HepG2 (cell line): ENCODE measurements at regions of chr11 and their contacts with region 1.

Region 1: GRCh38 chr11:46718155-46719019 is 626 bp upstream of the F2 start:
- DNase-seq: peak; percentile 98
- ATAC-seq: peak; percentile 92
- H3K4me3 ChIP-seq: peak overlapping the region in 2 of 3 experiments; percentile 3 to 92; a peak in 4 of 6 replicates
- H3K27ac ChIP-seq: peak overlapping the region; percentile 92
- H3K4me1 ChIP-seq: peaks cover 87% of the 10 kb centered on the region
- H3K27me3 ChIP-seq: no peaks in the 10 kb centered on the region; a peak in 1 of 5 replicates
- CTCF ChIP-seq: peak; percentile 50
- EP300 ChIP-seq: peak; percentile 77 to 97; a peak in 2 of 4 replicates
- POLR2A ChIP-seq: peak; percentile 56 to 58
- RAD21 ChIP-seq: peak; percentile 55

Region 2: GRCh38 chr11:46616998-46617675 is 101.2 kb before region 1 on chr11 and contains the starts of genes ATG13 and HARBI1:
- CTCF ChIA-PET with region 1: no interaction called
- POLR2A ChIA-PET with region 1: interaction called, 11 read pairs
- in situ Hi-C with region 1: no loop called
- intact Hi-C with region 1: no loop called
- DNase-seq: peak; percentile 77
- ATAC-seq: peak; percentile 97
- H3K4me3 ChIP-seq: peak within 1 kb of the TSS; percentile 99 to 100 (median 100)
- H3K27ac ChIP-seq: peak within 1 kb of the TSS; percentile 98
- H3K4me1 ChIP-seq: peaks cover 53% of the 10 kb centered on the region
- H3K27me3 ChIP-seq: no peaks in the 10 kb centered on the region; a peak in 1 of 5 replicates
- CTCF ChIP-seq: no peak
- EP300 ChIP-seq: peak in 1 of 2 experiments; percentile 45; a peak in 1 of 4 replicates
- POLR2A ChIP-seq: peak; percentile 60 to 87
- RAD21 ChIP-seq: 0 out of 2 replicates have a peak, but pooled peaks have one; percentile 12
- total RNA-seq, gene ATG13: 55.0 and 61.8 TPM in 2 replicates
- total RNA-seq, gene HARBI1: 4.8 and 6.9 TPM in 2 replicates

Region 3: DNA sequence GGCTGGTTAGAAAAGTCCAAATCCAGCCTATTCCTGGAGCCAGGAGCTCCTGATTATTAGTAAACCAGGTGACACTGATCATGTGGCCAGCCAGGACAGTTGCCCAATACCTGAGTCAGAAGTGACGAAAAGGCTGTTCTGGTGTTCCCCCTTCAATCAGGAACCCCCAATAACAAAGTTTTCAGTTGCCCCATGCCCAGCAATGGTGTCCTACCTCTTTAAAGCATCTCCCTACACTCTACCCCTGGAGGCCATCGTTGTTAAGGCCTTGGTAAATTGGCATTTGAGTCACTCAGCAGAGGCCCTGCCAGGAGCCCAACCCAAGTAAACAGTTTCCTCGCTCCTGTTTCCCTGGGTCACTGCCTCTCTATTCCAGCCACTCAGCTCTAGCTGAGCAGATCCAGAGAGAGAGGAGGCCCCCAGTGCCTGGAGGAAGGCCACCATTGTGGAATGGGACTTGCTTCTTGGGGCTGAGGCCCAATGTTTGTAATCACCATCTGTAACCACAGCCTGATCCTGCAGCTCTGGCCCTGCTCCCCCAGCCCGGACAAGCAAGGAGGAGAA is 43.0 kb before region 1 on chr11:
- CTCF ChIA-PET with region 1: no interaction called
- POLR2A ChIA-PET with region 1: interaction called, 22 read pairs
- in situ Hi-C with region 1: no loop called
- intact Hi-C with region 1: loop called (anchors 5 kb)
- DNase-seq: peak; percentile 55
- ATAC-seq: peak; percentile 71
- H3K4me3 ChIP-seq: peak overlapping the region in 1 of 3 experiments; percentile 19; a peak in 2 of 6 replicates
- H3K27ac ChIP-seq: peak overlapping the region; percentile 67
- H3K4me1 ChIP-seq: peaks cover 27% of the 10 kb centered on the region
- H3K27me3 ChIP-seq: no peaks in the 10 kb centered on the region
- CTCF ChIP-seq: no peak
- EP300 ChIP-seq: no peak
- POLR2A ChIP-seq: no peak
- RAD21 ChIP-seq: no peak

Region 4: GRCh38 chr11:46700241-46701077 is 17.9 kb before region 1 on chr11 and contains the starts of genes ARHGAP1 and ZNF408:
- CTCF ChIA-PET with region 1: no interaction called
- POLR2A ChIA-PET with region 1: interaction called, 272 read pairs
- in situ Hi-C with region 1: no loop called
- intact Hi-C with region 1: loop called (anchors 1 kb)
- DNase-seq: peak; percentile 97
- ATAC-seq: peak; percentile 94
- H3K4me3 ChIP-seq: peak within 1 kb of the TSS; percentile 83 to 99 (median 98)
- H3K27ac ChIP-seq: peak within 1 kb of the TSS; percentile 97
- H3K4me1 ChIP-seq: peaks cover 60% of the 10 kb centered on the region
- H3K27me3 ChIP-seq: no peaks in the 10 kb centered on the region; a peak in 1 of 5 replicates
- CTCF ChIP-seq: no peak
- EP300 ChIP-seq: peak in 1 of 2 experiments; percentile 37; a peak in 2 of 4 replicates
- POLR2A ChIP-seq: peak; percentile 82 to 98
- RAD21 ChIP-seq: peak; percentile 33; the same call in 1 of the 2 replicates
- total RNA-seq, gene ARHGAP1: 18.6 and 22.4 TPM in 2 replicates
- total RNA-seq, gene ZNF408: 8.3 and 12.5 TPM in 2 replicates

Region 5: DNA sequence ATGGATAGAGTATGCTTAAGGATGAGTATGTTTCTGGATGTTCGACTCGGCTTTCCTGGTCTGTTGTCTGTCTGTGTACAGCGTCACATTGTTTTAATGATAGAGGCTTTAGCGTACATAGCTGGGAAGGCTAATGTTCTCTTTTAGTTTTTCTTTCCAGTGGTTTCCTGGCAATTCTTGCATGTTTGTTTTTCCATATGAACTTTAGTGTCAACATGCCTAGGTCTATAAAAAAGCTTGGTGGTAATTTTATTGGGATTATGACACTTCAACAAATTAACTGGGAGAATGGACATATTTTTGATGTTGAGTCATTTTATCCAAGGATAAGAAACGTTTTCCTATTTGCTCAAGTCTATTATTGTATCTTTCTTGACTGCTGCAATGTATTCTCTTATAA is 18.2 kb after region 1 on chr11:
- CTCF ChIA-PET with region 1: no interaction called
- POLR2A ChIA-PET with region 1: interaction called, 58 read pairs
- in situ Hi-C with region 1: no loop called
- intact Hi-C with region 1: no loop called
- DNase-seq: no peak
- ATAC-seq: no peak
- H3K4me3 ChIP-seq: no peak overlapping the region
- H3K27ac ChIP-seq: no peak overlapping the region
- H3K4me1 ChIP-seq: peaks cover 14% of the 10 kb centered on the region
- H3K27me3 ChIP-seq: no peaks in the 10 kb centered on the region
- CTCF ChIP-seq: no peak
- EP300 ChIP-seq: no peak
- POLR2A ChIP-seq: 0 out of 4 replicates have a peak, but pooled peaks of 1 of the 2 experiments have one; percentile 24
- RAD21 ChIP-seq: no peak

Region 6: DNA sequence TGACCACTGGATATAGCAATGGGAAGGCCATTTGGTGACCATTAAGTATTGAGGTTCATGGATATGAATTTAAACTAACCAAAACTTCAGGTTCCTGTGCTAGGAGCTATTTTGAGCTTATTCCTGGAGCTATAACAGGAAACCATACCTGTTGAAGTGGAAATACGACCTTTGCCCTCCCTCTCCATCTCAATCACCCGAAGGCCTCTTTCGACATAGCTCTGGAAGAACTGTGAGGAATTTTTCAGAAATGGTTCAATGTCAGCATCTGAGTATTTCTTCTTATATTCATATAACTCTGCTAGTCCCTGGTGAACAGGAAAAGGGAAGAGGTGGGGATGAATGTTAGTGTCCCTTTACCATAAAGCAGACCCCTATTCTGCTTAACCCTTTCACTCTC is 31.7 kb after region 1 on chr11:
- CTCF ChIA-PET with region 1: no interaction called
- POLR2A ChIA-PET with region 1: interaction called, 12 read pairs
- in situ Hi-C with region 1: no loop called
- intact Hi-C with region 1: no loop called
- DNase-seq: no peak
- ATAC-seq: no peak
- H3K4me3 ChIP-seq: no peak overlapping the region
- H3K27ac ChIP-seq: no peak overlapping the region
- H3K4me1 ChIP-seq: peaks cover 16% of the 10 kb centered on the region
- H3K27me3 ChIP-seq: no peaks in the 10 kb centered on the region
- CTCF ChIP-seq: no peak
- EP300 ChIP-seq: no peak
- POLR2A ChIP-seq: peak in 1 of 2 experiments; percentile 24; a peak in 1 of 4 replicates
- RAD21 ChIP-seq: no peak